ENCODE measurements at regions of chr3 and their contacts with region 1.

Region 1: GRCh38 chr3:71325715-71326114 is 257.8 kb downstream of the FOXP1 start:
- DNase-seq: no peak
- ATAC-seq: no peak
- H3K4me3 Mint-ChIP-seq: no peak overlapping the region
- H3K27ac Mint-ChIP-seq: no peak overlapping the region
- H3K4me1 Mint-ChIP-seq: peaks cover 13% of the 10 kb centered on the region
- H3K27me3 Mint-ChIP-seq: no peaks in the 10 kb centered on the region
- CTCF ChIP-seq: no peak

Region 2: GRCh38 chr3:71345429-71346040 is 19.8 kb after region 1 on chr3:
- CTCF ChIA-PET with region 1: no interaction called
- POLR2A ChIA-PET with region 1: interaction called, 14 read pairs
- intact Hi-C with region 1: no loop called
- DNase-seq: no peak
- ATAC-seq: no peak
- H3K4me3 Mint-ChIP-seq: no peak overlapping the region
- H3K27ac Mint-ChIP-seq: peak overlapping the region; percentile 57
- H3K4me1 Mint-ChIP-seq: peaks cover 32% of the 10 kb centered on the region
- H3K27me3 Mint-ChIP-seq: no peaks in the 10 kb centered on the region
- CTCF ChIP-seq: no peak